ENCODE measurements at regions of chr17 and their contacts with region 1.

Region 1: DNA sequence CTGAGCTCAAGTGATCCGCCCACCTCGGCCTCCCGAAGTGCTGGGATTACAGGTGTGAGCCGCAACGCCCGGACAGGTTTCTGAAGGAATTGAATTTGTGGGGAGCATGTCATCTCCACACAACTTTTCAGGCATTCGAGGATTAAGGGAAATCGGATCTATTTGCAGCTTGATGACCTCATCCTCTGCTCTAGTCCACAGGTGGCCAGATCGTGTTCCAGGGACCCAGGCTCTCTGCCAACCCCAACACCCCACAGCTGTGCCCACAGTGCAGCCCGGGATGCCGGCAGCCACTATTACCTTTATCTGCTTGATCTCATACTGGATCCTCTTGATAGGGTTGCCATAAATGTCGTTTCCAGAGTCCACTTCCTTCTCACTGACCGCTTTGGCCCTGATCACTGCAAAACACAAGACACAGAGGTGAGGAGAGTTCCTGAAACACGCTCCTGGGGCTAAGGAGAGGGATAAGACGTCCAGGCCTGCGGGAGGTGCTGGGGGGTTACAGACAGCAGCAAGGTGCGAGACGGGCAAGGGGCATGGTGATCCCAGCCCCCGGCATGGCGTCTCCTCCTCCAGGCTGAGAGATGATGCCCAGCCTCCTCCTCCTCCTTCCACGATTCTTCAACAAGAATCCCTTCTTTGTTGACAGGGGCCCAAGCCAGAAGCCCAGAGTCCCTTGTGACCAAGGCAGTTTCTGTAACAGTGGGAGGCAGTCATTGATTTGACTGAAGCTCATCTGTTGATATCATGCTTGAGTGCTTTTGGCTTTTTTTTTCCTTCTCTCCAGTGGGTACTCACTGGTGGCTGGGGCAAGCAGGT is 29.3 kb downstream of the CEP295NL start:
- DNase-seq: peak; percentile 21
- H3K4me3 ChIP-seq: no peak overlapping the region
- H3K27ac ChIP-seq: no peak overlapping the region
- H3K4me1 ChIP-seq: no peaks in the 10 kb centered on the region
- H3K27me3 ChIP-seq: no peaks in the 10 kb centered on the region
- CTCF ChIP-seq: no peak

Region 2: DNA sequence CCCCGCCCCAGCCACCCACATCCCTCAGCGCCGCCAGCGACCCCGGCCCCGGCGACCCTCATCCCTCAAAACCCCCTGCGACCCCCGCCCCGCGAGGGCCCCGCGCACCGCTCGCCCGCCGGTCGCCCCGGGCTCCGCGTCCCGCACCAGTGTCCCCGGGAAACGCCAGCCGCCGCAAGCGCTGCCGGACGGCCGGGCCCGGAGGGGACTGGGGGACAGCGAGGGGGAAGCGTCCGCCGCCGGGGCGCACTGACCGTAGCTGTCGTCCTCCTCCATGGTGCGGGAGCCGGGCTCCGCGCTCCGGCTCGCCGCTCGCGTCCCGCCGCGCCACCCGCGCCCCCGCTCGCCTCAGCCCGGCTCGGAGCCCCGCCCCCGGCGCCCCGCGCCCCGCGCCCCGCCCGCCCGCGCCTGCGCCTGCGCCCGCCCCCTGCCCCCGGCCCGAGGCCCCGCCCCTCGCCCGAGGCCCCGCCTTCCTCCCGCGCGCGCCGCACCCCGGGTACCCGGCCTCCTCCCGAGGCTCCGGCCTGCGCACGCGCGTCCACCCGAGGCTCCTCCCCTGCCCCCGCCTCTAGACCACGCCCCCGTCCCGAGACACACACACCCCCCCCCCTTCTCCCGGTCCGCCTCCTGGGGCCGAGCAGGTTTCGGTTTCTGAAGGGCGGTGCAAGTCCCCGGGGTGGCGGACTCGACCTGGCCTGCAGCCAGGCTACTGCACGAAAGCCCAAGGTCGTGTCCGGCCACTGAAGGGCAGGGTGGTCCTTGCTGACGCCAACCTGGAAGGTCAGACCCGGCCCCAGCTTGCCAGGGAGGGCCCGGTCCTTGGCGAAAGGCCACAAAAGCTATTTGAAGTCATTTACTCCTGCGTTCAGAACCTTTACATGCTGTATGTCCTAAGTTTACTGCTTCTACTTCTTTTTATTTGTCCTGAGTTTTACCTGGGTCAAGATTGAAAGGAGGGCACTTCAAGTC is 91.5 kb before region 1 on chr17 and contains the start of gene CYTH1:
- CTCF ChIA-PET with region 1: no interaction called
- dilution Hi-C with region 1: no loop called
- in situ Hi-C with region 1: no loop called
- intact Hi-C with region 1: no loop called
- DNase-seq: peak; percentile 90
- H3K4me3 ChIP-seq: peak within 1 kb of the TSS; percentile 93 to 99 (median 97)
- H3K27ac ChIP-seq: peak within 1 kb of the TSS; percentile 99
- H3K4me1 ChIP-seq: peaks cover 20% of the 10 kb centered on the region
- H3K27me3 ChIP-seq: peaks cover 1% of the 10 kb centered on the region
- CTCF ChIP-seq: no peak
- total RNA-seq, gene CYTH1: 25.8 to 35.7 TPM

Region 3: DNA sequence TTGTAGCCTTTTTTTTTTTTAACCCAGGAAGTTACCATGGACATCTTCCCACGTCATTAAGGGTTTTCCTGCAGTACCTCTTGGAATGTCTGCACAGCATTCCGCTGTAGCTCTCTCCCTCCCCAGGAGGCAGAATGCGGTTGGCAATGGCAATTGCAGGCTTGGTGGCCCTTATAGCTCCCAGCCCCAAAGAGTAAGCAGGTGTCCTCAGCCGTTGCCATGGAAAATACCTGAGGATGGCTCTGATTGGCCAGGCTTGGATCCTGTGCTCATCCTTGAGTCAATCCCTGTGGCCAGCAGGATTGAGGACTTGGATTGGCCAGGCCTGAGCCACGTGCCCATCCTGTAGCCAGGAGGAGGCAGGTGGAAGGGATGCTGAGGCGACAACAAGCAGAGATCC is 67.0 kb after region 1 on chr17:
- CTCF ChIA-PET with region 1: no interaction called
- dilution Hi-C with region 1: loop called (anchors 5 kb)
- in situ Hi-C with region 1: no loop called
- intact Hi-C with region 1: no loop called
- DNase-seq: no peak
- H3K4me3 ChIP-seq: no peak overlapping the region
- H3K27ac ChIP-seq: no peak overlapping the region
- H3K4me1 ChIP-seq: no peaks in the 10 kb centered on the region
- H3K27me3 ChIP-seq: peaks cover 4% of the 10 kb centered on the region
- CTCF ChIP-seq: no peak

Region 4: GRCh38 chr17:79147746-79148506 is 274.2 kb after region 1 on chr17:
- CTCF ChIA-PET with region 1: no interaction called
- dilution Hi-C with region 1: loop called (anchors 5 kb)
- in situ Hi-C with region 1: no loop called
- intact Hi-C with region 1: no loop called
- DNase-seq: no peak
- H3K4me3 ChIP-seq: no peak overlapping the region
- H3K27ac ChIP-seq: no peak overlapping the region
- H3K4me1 ChIP-seq: no peaks in the 10 kb centered on the region
- H3K27me3 ChIP-seq: peaks cover 3% of the 10 kb centered on the region
- CTCF ChIP-seq: no peak

Measured in mammary epithelial cell (primary cell).